G401 (cell line): ENCODE measurements at regions of chr2 and their contacts with region 1.

Region 1: GRCh38 chr2:26519396-26520147 is 41.6 kb upstream of the OTOF start:
- DNase-seq: no peak

Region 2: DNA sequence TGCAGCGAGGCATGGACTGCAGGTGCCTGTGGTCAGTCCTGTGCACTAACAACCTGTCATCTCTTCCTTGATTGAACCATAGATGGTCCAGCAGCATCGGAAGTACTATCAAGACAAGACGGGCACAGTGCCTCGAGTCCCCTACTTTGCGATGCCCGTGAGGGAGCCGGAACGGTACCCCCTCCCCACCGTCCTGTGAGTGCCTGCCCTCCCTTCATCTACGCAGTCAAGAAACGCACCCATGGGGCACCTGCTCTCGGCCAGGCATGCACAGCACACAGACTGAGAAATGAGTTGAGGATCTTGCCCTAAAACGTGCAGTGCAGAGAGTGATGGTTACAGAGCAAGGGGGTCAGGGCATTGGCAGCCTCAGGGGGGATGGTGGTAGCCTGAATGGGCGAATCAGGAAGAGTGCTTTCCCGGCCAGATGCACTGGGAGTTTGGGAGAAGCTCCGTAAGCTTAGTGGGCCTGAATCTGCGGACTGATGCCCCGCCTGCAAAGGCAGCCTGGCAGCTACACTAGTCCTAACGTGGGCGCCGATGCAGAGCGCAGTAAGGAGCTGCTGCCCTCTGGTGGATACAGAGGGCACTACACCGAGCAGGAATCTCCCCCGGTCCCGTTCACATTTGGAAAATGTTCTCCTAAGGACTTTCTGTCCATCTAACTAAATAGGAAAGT is 58.0 kb after region 1 on chr2:
- in situ Hi-C with region 1: loop called (anchors 10 kb)
- DNase-seq: peak; percentile 82